ENCODE measurements at regions of chr1 and their contacts with region 1.

Region 1: GRCh38 chr1:219173758-219174588 is at the start of gene LYPLAL1:
- DNase-seq: peak; percentile 80
- H3K4me3 ChIP-seq: peak within 1 kb of the TSS; percentile 64 to 70 (median 65)
- H3K27ac ChIP-seq: peak within 1 kb of the TSS; percentile 80
- H3K4me1 ChIP-seq: peaks cover 25% of the 10 kb centered on the region
- H3K27me3 ChIP-seq: no peaks in the 10 kb centered on the region
- CTCF ChIP-seq: no peak
- total RNA-seq, gene LYPLAL1: 34.5 to 34.7 TPM

Region 2: DNA sequence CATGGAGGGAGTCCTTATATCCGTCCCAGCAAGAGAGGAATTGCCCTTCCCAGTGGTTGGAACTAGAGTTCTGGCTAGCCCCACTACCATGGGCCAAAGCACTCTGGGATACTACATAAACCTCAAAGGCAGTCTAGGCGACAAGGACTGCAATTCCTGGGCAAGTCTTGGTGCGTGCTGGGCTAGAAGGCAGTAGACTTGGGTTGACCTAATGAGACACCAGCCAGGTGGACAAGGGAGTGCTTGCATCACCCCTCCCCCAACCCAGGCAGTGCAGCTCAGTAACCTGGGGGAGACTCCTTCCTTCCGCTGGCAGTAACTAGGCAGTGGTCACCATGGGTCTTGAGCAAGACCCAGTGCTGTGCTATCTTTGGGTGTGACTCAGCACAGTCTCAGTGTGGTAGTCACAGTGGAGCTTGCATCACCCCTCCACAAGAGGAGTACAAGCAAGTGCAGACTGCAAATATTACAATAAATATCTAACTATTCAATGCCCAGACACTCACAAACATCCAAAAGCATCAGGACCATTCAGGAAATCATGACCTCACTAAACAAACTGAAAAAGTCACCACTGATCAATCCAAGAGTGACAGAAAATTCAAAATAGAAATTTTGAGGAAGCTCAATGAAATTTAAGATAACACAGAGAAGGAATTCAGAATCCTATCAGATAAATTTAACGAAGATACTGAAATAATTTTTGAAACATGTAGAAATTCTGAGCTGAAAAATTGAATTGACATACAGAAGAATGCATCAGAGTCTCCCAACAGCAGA is 85.0 kb before region 1 on chr1:
- CTCF ChIA-PET with region 1: no interaction called
- dilution Hi-C with region 1: no loop called
- in situ Hi-C with region 1: no loop called
- intact Hi-C with region 1: loop called (anchors 5 kb)
- DNase-seq: peak; percentile 89
- H3K4me3 ChIP-seq: no peak overlapping the region
- H3K27ac ChIP-seq: peak overlapping the region; percentile 6
- H3K4me1 ChIP-seq: peaks cover 13% of the 10 kb centered on the region
- H3K27me3 ChIP-seq: no peaks in the 10 kb centered on the region
- CTCF ChIP-seq: no peak

Measured in mammary epithelial cell (primary cell).